Activated T-helper 2 cell treated with anti-CD3 and anti-CD28 coated beads, Interferon-gamma antibody, Interleukin-2, Interleukin-4, amounts not matched to agents 10 μg/mL and 5 μg/mL and 100 μg/mL, durations not matched to agents 14 hours and 24 hours and 36 hours (primary cell): ENCODE measurements at regions of chr4 and their contacts with region 1.

Region 1: GRCh38 chr4:98688411-98689290 is 30.2 kb upstream of the TSPAN5 start:
- DNase-seq: no peak
- H3K4me3 Mint-ChIP-seq: no peak overlapping the region
- H3K27ac Mint-ChIP-seq: peak overlapping the region; percentile 65
- H3K4me1 Mint-ChIP-seq: peaks cover 22% of the 10 kb centered on the region
- H3K27me3 Mint-ChIP-seq: no peaks in the 10 kb centered on the region

Region 2: DNA sequence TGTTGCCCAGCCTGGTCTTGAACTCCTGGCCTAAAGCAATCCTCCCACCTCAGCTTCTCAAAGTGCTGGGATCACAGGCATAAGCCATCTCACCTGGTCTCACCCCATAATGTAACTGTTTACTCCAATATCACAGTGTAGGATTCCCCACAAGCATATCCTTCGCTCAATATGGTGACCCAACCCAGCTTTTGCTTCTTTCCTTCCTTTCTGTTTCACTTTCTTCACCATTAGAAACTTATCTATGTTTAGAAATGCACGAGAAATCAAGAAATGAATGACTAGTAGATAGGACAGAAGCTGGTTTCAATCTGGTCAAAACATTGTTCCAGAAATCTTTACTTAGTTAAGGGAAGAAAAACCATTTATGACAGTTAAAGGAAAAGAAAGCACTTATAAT is 49.1 kb before region 1 on chr4:
- intact Hi-C with region 1: loop called (anchors 5 kb)
- DNase-seq: no peak
- H3K4me3 Mint-ChIP-seq: peak overlapping the region; percentile 66
- H3K27ac Mint-ChIP-seq: peak overlapping the region; percentile 81
- H3K4me1 Mint-ChIP-seq: peaks cover 44% of the 10 kb centered on the region
- H3K27me3 Mint-ChIP-seq: no peaks in the 10 kb centered on the region

Region 3: GRCh38 chr4:98706200-98706813 is 17.7 kb after region 1 on chr4:
- intact Hi-C with region 1: loop called (anchors 1 kb)
- DNase-seq: peak; percentile 53
- H3K4me3 Mint-ChIP-seq: peak overlapping the region; percentile 67
- H3K27ac Mint-ChIP-seq: peak overlapping the region; percentile 87
- H3K4me1 Mint-ChIP-seq: peaks cover 26% of the 10 kb centered on the region
- H3K27me3 Mint-ChIP-seq: no peaks in the 10 kb centered on the region